Activated CD4-positive, alpha-beta T cell treated with anti-CD3 and anti-CD28 coated beads, Interleukin-2, amount 10 ng/mL, durations not matched to agents 7 days and 5 days (primary cell): ENCODE measurements at regions of chr16 and their contacts with region 1.

Region 1: DNA sequence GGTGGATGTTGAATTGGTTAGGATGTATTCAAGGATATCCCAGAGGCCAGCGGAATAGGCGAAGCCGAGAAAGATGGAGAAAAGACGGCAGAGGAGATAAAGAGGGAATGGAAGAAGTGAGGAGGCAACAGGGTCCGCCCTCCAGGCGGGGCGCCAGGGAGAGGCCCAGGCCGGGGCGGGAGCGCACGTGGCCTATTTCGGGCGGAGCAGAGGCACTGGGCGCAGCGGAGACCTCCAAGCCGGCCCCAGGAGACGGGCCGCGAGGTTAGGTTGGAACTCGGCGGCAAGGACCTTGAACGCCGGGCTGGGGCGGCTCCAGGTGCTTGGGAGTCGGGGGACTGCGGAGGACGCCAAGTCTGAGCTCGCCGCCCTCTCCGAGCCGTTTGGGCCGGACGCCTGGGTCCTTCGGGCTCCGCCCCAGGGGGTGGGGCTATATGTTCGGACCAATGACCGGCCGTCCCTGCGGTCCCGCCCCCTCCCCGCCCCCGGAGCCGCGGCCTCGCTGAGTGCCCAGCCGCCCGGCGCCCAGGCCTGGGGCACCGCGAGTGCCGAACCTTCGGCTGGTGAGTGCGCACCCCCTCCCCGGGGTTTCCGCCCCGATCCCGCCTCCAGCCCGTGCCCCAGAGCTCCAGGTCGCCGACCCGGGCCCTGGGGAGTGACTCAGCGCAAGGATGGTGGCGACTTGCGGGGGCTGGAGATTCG is at the start of gene ZNF771:
- DNase-seq: peak; percentile 91
- H3K4me3 Mint-ChIP-seq: peak within 1 kb of the TSS; percentile 87
- H3K27ac Mint-ChIP-seq: peak within 1 kb of the TSS; percentile 94
- H3K4me1 Mint-ChIP-seq: peaks cover 30% of the 10 kb centered on the region
- H3K27me3 Mint-ChIP-seq: peaks cover 6% of the 10 kb centered on the region
- total RNA-seq, gene ZNF771: 3.4 to 3.7 TPM

Region 2: DNA sequence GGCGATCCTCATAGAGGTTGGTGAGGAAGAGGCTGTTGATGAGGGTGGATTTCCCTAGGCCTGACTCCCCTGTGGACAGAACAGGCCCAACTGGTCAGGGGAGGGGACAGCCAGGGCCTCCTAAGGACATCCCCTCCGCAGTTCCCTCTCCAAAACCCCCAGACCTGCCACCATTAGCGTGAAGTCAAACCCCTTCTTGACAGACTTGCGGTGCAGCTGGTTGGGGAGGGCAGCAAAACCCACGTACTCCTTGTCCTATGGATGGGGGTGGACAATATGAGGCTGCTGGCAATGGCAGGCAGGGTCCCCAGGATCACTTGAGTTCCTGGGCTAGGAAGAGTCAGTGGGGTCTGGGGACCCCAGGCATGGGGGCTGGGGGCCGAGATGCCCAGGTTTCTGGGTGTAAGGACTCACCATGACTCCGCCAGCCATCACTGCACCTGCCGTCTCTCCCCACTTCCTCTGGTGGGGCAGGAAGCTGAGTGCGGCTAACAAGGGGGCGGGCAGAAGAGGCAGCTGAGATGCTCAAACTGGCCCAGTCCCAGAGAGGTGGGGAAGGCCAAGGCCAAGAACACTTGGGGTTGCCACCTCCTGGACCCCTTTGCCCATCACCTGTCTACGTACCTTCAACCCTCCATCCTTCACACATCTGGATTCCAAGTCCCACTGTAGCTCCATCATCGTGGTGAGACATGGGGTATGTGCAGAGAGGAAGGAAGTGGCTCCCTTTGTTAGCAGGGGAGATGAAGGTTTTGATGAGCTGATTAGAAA is 25.0 kb before region 1 on chr16 and contains the start of gene SEPTIN1:
- CTCF ChIA-PET with region 1: interaction called, 21 read pairs
- POLR2A ChIA-PET with region 1: interaction called, 3 read pairs
- DNase-seq: peak; percentile 87
- H3K4me3 Mint-ChIP-seq: peak within 1 kb of the TSS; percentile 90
- H3K27ac Mint-ChIP-seq: peak within 1 kb of the TSS; percentile 90
- H3K4me1 Mint-ChIP-seq: peaks cover 59% of the 10 kb centered on the region
- H3K27me3 Mint-ChIP-seq: no peaks in the 10 kb centered on the region
- total RNA-seq, gene SEPTIN1: 383 to 413 TPM

Region 3: GRCh38 chr16:30395155-30395991 is 11.9 kb before region 1 on chr16 and contains the start of gene ZNF48:
- CTCF ChIA-PET with region 1: interaction called, 24 read pairs
- POLR2A ChIA-PET with region 1: interaction called, 3 read pairs
- DNase-seq: peak; percentile 38
- H3K4me3 Mint-ChIP-seq: peak within 1 kb of the TSS; percentile 95
- H3K27ac Mint-ChIP-seq: peak within 1 kb of the TSS; percentile 87
- H3K4me1 Mint-ChIP-seq: peaks cover 38% of the 10 kb centered on the region
- H3K27me3 Mint-ChIP-seq: no peaks in the 10 kb centered on the region
- total RNA-seq, gene ZNF48: 13.7 to 13.9 TPM

Region 4: GRCh38 chr16:30417529-30418349 is 10.5 kb after region 1 on chr16:
- CTCF ChIA-PET with region 1: interaction called, 47 read pairs
- POLR2A ChIA-PET with region 1: no interaction called
- DNase-seq: peak; percentile 90
- H3K4me3 Mint-ChIP-seq: peak overlapping the region; percentile 59
- H3K27ac Mint-ChIP-seq: peak overlapping the region; percentile 31
- H3K4me1 Mint-ChIP-seq: peaks cover 35% of the 10 kb centered on the region
- H3K27me3 Mint-ChIP-seq: no peaks in the 10 kb centered on the region

Region 5: GRCh38 chr16:30437486-30438046 is 30.3 kb after region 1 on chr16:
- CTCF ChIA-PET with region 1: no interaction called
- POLR2A ChIA-PET with region 1: no interaction called
- DNase-seq: no peak
- H3K4me3 Mint-ChIP-seq: no peak overlapping the region
- H3K27ac Mint-ChIP-seq: no peak overlapping the region
- H3K4me1 Mint-ChIP-seq: peaks cover 19% of the 10 kb centered on the region
- H3K27me3 Mint-ChIP-seq: no peaks in the 10 kb centered on the region

Region 6: DNA sequence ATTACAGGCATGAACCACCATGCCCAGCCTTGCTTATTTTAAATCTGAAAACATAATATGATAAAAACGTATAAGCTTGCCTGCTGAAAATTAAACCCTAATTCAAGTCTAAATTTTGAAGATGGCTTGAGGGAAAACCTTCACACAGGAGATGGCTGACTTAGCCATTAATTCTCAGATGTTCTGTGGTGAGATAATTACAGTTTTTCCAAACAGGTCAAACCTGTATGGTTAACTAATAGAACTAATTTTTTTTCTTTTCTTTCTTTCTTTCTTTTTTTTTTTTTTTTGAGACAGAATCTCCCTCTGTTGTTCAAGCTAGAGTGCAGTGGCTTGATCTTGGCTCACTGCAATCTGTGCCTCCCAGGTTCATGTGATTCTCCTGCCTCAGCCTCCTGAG is 59.5 kb after region 1 on chr16:
- CTCF ChIA-PET with region 1: no interaction called
- POLR2A ChIA-PET with region 1: no interaction called
- DNase-seq: no peak
- H3K4me3 Mint-ChIP-seq: no peak overlapping the region
- H3K27ac Mint-ChIP-seq: peak overlapping the region; percentile 86
- H3K4me1 Mint-ChIP-seq: peaks cover 65% of the 10 kb centered on the region
- H3K27me3 Mint-ChIP-seq: no peaks in the 10 kb centered on the region